Heart right ventricle (tissue), 16 donors: ENCODE measurements at regions of chr14 and their contacts with region 1.

Region 1: DNA sequence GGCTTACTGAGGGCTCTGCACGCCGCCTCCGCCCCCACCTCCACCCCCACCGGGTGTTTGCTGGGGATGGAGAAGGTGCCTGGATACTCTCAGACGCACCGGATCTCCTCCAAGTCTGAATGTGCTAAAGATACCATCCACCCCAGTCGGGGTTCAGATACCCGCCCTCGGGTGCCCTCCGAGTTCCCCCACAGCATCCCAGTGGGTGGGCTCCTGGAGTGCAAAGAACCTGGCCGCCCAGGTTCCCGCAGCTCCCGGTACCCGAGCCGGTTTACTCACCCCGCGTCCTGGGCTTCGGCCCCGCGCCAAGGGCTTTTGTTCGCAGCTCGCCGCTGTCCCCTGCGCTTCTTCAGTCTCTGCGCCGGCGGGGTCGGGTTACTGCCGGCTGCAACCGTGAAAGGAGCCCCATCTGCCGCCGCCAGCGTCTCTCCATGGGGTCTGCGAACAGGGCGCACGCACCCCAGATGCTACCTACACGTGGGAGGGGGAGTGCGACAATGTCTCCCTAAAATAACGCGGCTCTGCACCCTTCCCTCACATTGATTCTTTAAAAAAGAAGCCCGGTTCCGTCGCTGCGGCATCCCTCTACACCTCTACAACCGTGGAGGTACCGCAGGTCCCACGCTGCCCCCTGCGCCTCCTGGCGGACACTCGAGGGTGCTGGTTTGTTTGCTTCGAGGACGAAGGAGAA is at the start of gene CCDC177:
- DNase-seq: peak in 1 of 2 donors; percentile 53
- ATAC-seq: peak in 5 of 8 donors; percentile 55 to 77 (median 62)
- H3K4me3 ChIP-seq: peak within 1 kb of the TSS in 8 of 10 donors; percentile 6 to 61 (median 33)
- H3K27ac ChIP-seq: no peak within 1 kb of the TSS
- H3K4me1 ChIP-seq: peaks cover 12 to 38% (median 33%) of the 10 kb centered on the region in 9 donors
- H3K27me3 ChIP-seq: peaks cover 33 to 97% (median 85%) of the 10 kb centered on the region in 7 donors
- CTCF ChIP-seq: peak; percentile 46 to 87 (median 79)
- total RNA-seq, gene CCDC177: not detected

Region 2: GRCh38 chr14:69535230-69535848 is 39.1 kb before region 1 on chr14:
- intact Hi-C with region 1: loop called in 1 of 10 experiments (anchors 5 kb)
- DNase-seq: peak in 1 of 2 donors; percentile 18
- ATAC-seq: peak in 2 of 8 donors; percentile 34 to 37
- H3K4me3 ChIP-seq: no peak overlapping the region
- H3K27ac ChIP-seq: no peak overlapping the region
- H3K4me1 ChIP-seq: peaks cover 0 to under 1% (median 0%) of the 10 kb centered on the region in 9 donors
- H3K27me3 ChIP-seq: peaks cover 0 to 36% (median 19%) of the 10 kb centered on the region in 7 donors
- CTCF ChIP-seq: peak; percentile 8 to 72 (median 58)

Region 3: DNA sequence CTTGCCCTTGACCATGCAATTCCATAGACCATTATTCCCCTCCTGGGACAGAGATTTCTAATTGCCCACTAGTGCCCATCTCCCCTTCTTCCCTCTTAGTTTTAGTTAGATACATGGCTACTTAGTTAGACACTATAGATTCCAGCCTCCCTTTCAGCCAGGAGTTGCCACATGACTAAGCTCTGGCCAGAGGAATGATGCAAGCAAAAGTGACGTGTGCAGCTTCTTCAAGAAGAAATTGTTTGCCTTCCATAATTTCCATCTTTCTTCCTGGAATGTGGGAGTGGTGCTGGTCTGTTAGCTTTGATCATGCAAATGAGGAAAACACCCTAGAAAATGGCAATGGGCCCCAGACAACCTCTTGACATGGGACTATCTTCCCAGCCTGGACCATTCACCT is 21.2 kb before region 1 on chr14:
- intact Hi-C with region 1: no loop called
- DNase-seq: no peak
- ATAC-seq: no peak
- H3K4me3 ChIP-seq: no peak overlapping the region
- H3K27ac ChIP-seq: no peak overlapping the region
- H3K4me1 ChIP-seq: peaks cover 0 to 1% (median 0%) of the 10 kb centered on the region in 9 donors
- H3K27me3 ChIP-seq: peaks cover 0 to 70% (median 48%) of the 10 kb centered on the region in 7 donors
- CTCF ChIP-seq: no peak